GM13976 (cell line): ENCODE measurements at regions of chr1 and their contacts with region 1.

Region 1: DNA sequence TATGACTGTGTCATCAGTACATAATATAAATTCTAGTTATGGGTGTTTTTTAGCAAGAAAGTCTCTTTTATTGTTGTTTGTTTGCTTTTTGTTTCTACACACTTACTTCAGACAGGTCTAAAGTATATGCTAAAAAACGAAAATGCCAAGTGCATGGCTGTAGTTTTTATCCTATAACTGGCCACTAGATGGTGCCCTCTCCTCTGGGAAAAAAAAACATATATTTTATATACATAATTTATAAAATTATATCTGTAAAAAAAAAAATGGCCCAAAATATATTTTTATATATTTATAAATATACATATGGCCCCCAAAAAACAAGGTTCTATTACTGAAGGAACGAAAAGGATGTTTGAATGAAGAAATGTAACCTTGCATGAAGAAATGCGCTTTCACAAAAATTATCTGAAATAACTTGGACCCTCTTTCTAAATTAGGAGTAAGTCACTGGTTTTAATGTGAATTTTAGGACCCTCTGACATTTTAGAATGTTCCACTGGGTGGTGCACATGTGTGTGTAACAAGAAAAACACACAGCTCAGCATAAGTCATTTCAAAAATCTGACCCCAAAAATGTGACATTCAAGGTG is 93.5 kb downstream of the TTLL7 start:
- DNase-seq: peak; percentile 3
- CTCF ChIP-seq: no peak

Region 2: GRCh38 chr1:84753516-84754385 is 848.3 kb after region 1 on chr1:
- in situ Hi-C with region 1: loop called (anchors 25 kb)
- DNase-seq: peak; percentile 81
- CTCF ChIP-seq: peak; percentile 98